ENCODE measurements at regions of chr17 and their contacts with region 1.

Region 1: GRCh38 chr17:63919311-63919723 is 678 bp upstream of the GH1 start:
- DNase-seq: peak; percentile 88
- CTCF ChIP-seq: peak; percentile 90

Region 2: DNA sequence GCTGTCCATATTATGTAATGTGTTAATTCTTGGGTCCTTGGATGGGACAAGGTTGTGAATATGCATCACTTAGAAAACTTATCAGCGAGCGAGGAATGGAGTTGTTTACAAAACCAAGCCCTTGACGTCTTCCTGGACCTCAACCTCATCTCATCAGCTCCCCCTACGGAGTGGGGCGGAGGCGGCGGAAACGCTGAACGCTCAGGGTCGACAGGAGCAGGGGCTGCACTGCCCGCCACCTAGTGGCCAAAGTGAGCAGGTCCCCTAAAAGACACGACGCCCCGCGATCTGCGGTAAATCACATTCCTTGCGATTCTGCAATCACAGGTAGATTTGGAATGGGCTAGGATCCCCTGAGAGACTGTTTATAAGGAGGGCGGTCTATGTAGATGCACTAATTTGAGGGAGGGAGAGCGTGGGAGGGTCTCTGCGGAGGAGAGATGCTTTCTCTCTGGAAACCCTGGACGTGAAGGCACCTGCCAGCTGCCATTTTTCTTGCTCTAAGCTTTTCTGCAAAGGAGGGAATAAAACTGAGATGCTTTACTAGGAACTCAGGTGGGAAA is 106.5 kb after region 1 on chr17:
- in situ Hi-C with region 1: loop called (anchors 10 kb)
- DNase-seq: peak; percentile 81
- CTCF ChIP-seq: peak; percentile 92

Region 3: GRCh38 chr17:64129764-64130558 is 210.6 kb after region 1 on chr17 and contains the start of gene ERN1:
- in situ Hi-C with region 1: loop called (anchors 10 kb)
- DNase-seq: peak; percentile 95
- CTCF ChIP-seq: no peak

Region 4: GRCh38 chr17:64281962-64282727 is 362.8 kb after region 1 on chr17:
- in situ Hi-C with region 1: loop called (anchors 25 kb)
- DNase-seq: peak; percentile 72
- CTCF ChIP-seq: peak; percentile 62

Measured in GM13976 (cell line).